PC-3 (cell line): ENCODE measurements at regions of chrX and their contacts with region 1.

Region 1: GRCh38 chrX:136909706-136910564 is 29.4 kb upstream of the RBMX start:
- DNase-seq: peak; percentile 83
- ATAC-seq: peak; percentile 75
- H3K4me3 ChIP-seq: peak overlapping the region; percentile 96
- H3K27ac ChIP-seq: peak overlapping the region; percentile 67
- H3K4me1 ChIP-seq: peaks cover 14% of the 10 kb centered on the region
- H3K27me3 ChIP-seq: no peaks in the 10 kb centered on the region
- CTCF ChIP-seq: no peak

Region 2: DNA sequence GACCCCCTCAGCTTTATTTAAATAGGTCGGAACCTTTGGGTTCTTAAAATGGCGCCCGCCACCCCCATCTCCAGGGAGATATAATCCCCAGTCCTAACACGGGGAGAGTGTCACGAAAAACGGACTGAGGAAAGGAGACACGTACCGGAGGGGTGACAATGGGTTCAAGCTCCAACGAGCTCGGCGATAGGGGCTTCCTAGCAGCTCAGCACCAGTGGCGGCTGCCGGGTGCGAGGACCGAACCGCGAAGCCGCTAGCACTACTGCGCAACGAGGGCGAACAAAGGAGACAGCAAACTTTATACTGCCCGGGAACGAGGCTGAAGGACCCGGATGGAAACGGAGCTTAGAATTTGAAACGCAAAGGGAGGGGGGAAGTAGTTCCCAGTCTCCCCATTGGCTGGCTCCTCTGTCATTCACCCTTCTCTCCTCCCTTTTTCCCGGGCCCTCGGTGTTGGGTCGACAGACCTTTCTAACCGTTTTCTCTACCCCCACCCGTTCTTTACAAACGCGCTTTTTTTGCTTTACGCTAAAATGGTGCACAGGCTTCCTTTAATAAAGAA is 29.4 kb before region 1 on chrX and contains the start of gene RBMX:
- CTCF ChIA-PET with region 1: no interaction called
- POLR2A ChIA-PET with region 1: interaction called, 17 read pairs
- intact Hi-C with region 1: loop called (anchors 1 kb)
- DNase-seq: peak; percentile 92
- ATAC-seq: peak; percentile 95
- H3K4me3 ChIP-seq: peak within 1 kb of the TSS; percentile 93
- H3K27ac ChIP-seq: peak within 1 kb of the TSS; percentile 66
- H3K4me1 ChIP-seq: peaks cover 4% of the 10 kb centered on the region; the same call in 1 of the 2 replicates
- H3K27me3 ChIP-seq: no peaks in the 10 kb centered on the region
- CTCF ChIP-seq: no peak
- total RNA-seq, gene RBMX: 278 and 288 TPM in 2 replicates